Naive thymus-derived CD4-positive, alpha-beta T cell (primary cell): ENCODE measurements at regions of chr7 and their contacts with region 1.

Region 1: GRCh38 chr7:36625247-36625646 is 99.0 kb downstream of the AOAH start:
- DNase-seq: no peak
- ATAC-seq: no peak
- H3K4me3 ChIP-seq: no peak overlapping the region
- H3K4me3 Mint-ChIP-seq: peak overlapping the region in 1 of 10 donors; percentile 0
- H3K27ac ChIP-seq: no peak overlapping the region
- H3K27ac Mint-ChIP-seq: peak overlapping the region in 3 of 9 donors; percentile 8 to 84 (median 69)
- H3K4me1 ChIP-seq: peaks cover 0 to 6% of the 10 kb centered on the region in 2 donors
- H3K4me1 Mint-ChIP-seq: peaks cover 21 to 57% (median 40%) of the 10 kb centered on the region in 7 donors
- H3K27me3 ChIP-seq: no peaks in the 10 kb centered on the region
- H3K27me3 Mint-ChIP-seq: no peaks in the 10 kb centered on the region

Region 2: DNA sequence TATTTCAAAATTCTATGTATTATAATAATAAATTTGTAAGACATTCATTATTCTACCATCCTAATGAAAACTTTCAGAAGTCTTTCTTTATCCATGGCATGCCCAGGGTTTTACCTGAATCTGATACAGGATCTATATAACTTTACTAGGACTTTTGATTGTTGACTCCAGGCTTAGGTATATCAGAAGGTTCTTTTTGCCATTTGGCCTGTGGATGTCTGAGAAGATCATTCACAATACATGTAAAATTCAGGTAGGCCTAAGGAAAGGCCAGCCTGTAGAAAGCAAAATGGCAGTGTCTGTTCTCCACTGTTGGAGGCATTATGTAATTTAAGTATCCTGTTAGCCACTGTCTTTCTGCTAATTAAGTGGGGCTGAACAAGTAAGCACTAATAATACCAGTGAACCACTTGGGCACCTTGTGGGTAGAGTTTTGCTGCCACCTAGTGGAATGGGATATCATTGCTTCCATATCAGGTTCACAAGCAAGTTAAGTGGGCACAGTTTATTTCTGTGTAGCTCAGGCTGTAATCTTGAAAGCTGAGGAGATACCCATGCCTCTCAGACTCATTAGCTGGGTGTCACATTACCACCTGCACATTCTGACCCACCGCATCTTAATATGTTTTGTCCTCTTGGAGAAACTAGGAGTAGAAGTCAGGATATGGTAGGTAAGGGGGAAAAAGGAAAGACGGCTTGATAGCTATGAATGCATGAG is 718.9 kb before region 1 on chr7:
- CTCF ChIA-PET with region 1: no interaction called
- POLR2A ChIA-PET with region 1: no interaction called
- intact Hi-C with region 1: no loop called
- DNase-seq: peak; percentile 21 to 79 (median 70)
- ATAC-seq: peak; percentile 97
- H3K4me3 ChIP-seq: no peak overlapping the region
- H3K4me3 Mint-ChIP-seq: no peak overlapping the region
- H3K27ac ChIP-seq: no peak overlapping the region
- H3K27ac Mint-ChIP-seq: peak overlapping the region in 6 of 9 donors; percentile 37 to 88 (median 66)
- H3K4me1 ChIP-seq: no peaks in the 10 kb centered on the region
- H3K4me1 Mint-ChIP-seq: peaks cover 0 to 10% (median 0%) of the 10 kb centered on the region in 7 donors
- H3K27me3 ChIP-seq: no peaks in the 10 kb centered on the region
- H3K27me3 Mint-ChIP-seq: no peaks in the 10 kb centered on the region

Region 3: DNA sequence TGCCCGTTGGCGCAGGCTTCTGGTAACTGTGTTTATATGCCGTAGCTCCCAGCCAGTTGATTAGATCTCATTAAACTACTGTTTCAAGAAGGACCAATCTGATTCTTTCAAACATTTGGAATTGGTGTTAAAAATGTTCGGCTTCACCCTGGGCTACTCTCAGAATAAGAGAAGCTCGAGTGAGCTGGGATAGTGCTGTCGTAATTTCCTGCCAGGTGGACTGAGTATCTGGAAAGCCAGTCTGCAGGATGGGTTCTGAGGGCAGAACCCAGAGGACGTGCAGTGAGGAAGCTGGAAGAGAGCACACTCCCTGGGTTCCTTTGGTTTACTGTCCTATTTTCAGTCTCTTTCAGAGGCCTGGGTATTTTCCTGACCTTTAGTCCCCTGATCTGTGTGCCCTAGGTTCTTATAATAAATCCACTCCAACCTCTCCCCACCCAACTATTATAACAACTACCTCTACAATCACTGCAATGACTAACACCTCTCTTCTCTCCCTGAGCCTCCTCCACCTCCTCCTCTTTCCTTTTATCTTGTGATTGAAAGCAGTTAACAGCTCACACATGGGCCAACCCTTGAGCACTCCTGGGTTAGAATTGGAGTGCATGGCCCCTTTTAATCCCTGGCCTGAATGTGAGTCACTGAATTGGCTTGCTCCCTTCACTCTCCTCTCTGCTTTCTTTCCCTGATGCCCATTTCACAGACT is 36.0 kb after region 1 on chr7:
- CTCF ChIA-PET with region 1: no interaction called
- POLR2A ChIA-PET with region 1: interaction called, 3 read pairs
- intact Hi-C with region 1: loop called in 1 of 2 experiments (anchors 5 kb)
- DNase-seq: no peak
- ATAC-seq: no peak
- H3K4me3 ChIP-seq: no peak overlapping the region
- H3K4me3 Mint-ChIP-seq: no peak overlapping the region
- H3K27ac ChIP-seq: no peak overlapping the region
- H3K27ac Mint-ChIP-seq: peak overlapping the region in 3 of 9 donors; percentile 45 to 82 (median 55)
- H3K4me1 ChIP-seq: peaks cover 0 to 11% of the 10 kb centered on the region in 2 donors
- H3K4me1 Mint-ChIP-seq: peaks cover 0 to 40% (median 14%) of the 10 kb centered on the region in 7 donors
- H3K27me3 ChIP-seq: no peaks in the 10 kb centered on the region
- H3K27me3 Mint-ChIP-seq: no peaks in the 10 kb centered on the region